ENCODE measurements at regions of chr1 and their contacts with region 1.

Region 1: DNA sequence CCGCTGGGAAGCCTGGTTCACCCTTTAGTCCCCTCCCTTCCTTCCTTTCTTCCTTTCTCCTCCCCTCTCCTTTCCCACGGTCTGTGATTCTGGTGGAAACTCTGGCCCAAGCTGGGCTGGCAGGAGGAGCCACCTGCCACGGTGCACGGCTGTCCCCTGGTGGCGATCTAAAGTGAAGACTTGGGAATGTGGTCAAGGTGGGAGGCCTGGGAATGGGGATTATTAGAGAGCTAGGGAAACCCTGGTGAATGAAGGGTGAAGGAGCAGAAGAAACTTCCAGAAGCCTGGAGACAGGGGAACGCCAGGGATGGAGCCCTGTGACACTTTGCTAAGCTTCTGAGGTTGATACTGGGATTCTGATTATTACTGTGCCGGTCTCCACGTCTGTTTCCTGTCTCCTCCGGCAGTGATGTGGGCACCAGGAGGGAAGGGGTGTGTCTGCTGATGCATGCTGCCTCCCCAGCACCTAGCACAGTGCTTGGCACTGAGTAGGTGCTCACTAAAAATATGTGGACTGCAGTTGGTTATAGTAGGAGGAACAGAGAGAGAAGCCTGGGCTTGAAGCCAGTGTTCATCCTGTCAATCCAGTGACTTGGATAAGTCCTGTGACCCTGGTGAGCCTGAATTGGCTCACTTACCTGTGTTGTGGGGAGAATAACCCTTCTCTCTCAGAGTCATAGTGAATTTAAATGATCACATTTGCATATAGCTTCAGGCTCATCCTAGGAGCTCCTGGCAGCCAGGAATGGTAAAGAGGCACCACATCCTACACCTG is 71.2 kb upstream of the NBPF3 start:
- DNase-seq: peak; percentile 95
- H3K4me3 ChIP-seq: no peak overlapping the region
- H3K27ac ChIP-seq: no peak overlapping the region
- H3K4me1 ChIP-seq: peaks cover 0 to 9% (median 4%) of the 10 kb centered on the region in 4 donors
- H3K27me3 ChIP-seq: no peaks in the 10 kb centered on the region
- CTCF ChIP-seq: peak; percentile 99 to 100 (median 100)
- EP300 ChIP-seq: no peak
- POLR2A ChIP-seq: no peak

Region 2: GRCh38 chr1:21232044-21232443 is 136.7 kb before region 1 on chr1:
- intact Hi-C with region 1: loop called (anchors 1 kb)
- DNase-seq: no peak
- H3K4me3 ChIP-seq: no peak overlapping the region
- H3K27ac ChIP-seq: no peak overlapping the region
- H3K4me1 ChIP-seq: peaks cover 0 to 4% (median 0%) of the 10 kb centered on the region in 4 donors
- H3K27me3 ChIP-seq: no peaks in the 10 kb centered on the region
- CTCF ChIP-seq: peak; percentile 73 to 87 (median 78)
- EP300 ChIP-seq: no peak
- POLR2A ChIP-seq: no peak

Region 3: GRCh38 chr1:21255278-21255942 is 113.3 kb before region 1 on chr1:
- intact Hi-C with region 1: loop called (anchors 1 kb)
- DNase-seq: peak; percentile 97
- H3K4me3 ChIP-seq: no peak overlapping the region
- H3K27ac ChIP-seq: peak overlapping the region; percentile 53 to 85 (median 70)
- H3K4me1 ChIP-seq: peaks cover 34 to 50% (median 47%) of the 10 kb centered on the region in 4 donors
- H3K27me3 ChIP-seq: no peaks in the 10 kb centered on the region
- CTCF ChIP-seq: peak; percentile 84 to 86 (median 85)
- EP300 ChIP-seq: no peak
- POLR2A ChIP-seq: no peak

Region 4: GRCh38 chr1:21302747-21303715 is 65.7 kb before region 1 on chr1:
- intact Hi-C with region 1: loop called (anchors 5 kb)
- DNase-seq: no peak
- H3K4me3 ChIP-seq: no peak overlapping the region
- H3K27ac ChIP-seq: peak overlapping the region in 1 of 4 donors; percentile 9
- H3K4me1 ChIP-seq: peaks cover 44 to 85% (median 73%) of the 10 kb centered on the region in 4 donors
- H3K27me3 ChIP-seq: peaks cover 0 to 6% (median 0%) of the 10 kb centered on the region in 4 donors
- CTCF ChIP-seq: peak; percentile 32 to 40 (median 33)
- EP300 ChIP-seq: no peak
- POLR2A ChIP-seq: no peak

Region 5: GRCh38 chr1:21573971-21574465 is 205.3 kb after region 1 on chr1:
- intact Hi-C with region 1: loop called (anchors 5 kb)
- DNase-seq: no peak
- H3K4me3 ChIP-seq: no peak overlapping the region
- H3K27ac ChIP-seq: peak overlapping the region; percentile 78 to 87 (median 82)
- H3K4me1 ChIP-seq: peaks cover 21 to 26% (median 22%) of the 10 kb centered on the region in 4 donors
- H3K27me3 ChIP-seq: no peaks in the 10 kb centered on the region
- CTCF ChIP-seq: peak; percentile 53 to 78 (median 59)
- EP300 ChIP-seq: no peak
- POLR2A ChIP-seq: no peak

Measured in esophagus muscularis mucosa (tissue), 4 donors.